ENCODE measurements at regions of chr6 and their contacts with region 1.

Region 1: DNA sequence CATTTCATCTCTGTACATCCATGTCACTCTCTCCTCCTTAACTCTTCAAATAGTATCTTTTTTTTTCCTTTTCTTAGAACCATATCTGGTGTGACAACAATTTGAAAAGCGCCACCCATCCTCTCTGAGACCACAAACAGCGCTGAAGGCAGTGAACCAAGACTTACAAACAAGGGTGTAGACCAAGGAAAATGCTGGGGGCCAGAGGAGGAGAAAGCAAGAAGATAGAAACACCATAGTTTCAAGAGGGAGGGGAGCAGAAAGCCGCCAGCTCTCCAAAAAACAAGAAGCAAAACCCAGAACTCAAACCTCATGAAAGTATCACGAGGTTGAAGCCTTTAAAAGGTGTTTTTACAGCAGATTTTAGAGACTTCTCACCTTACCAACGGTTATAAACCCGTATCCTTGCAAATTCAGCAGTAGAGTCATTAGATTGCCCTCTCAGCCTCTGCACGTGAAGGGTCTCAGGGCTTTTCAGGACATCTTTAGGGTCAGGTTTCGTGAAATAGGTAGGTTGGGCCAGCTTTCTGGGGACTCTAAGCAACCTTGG is 13.3 kb upstream of the RIPOR2 start:
- DNase-seq: peak; percentile 70 to 86 (median 83)
- H3K4me3 ChIP-seq: peak overlapping the region; percentile 19 to 47
- H3K4me3 Mint-ChIP-seq: peak overlapping the region; percentile 57 to 90 (median 82)
- H3K27ac ChIP-seq: peak overlapping the region; percentile 51
- H3K27ac Mint-ChIP-seq: peak overlapping the region; percentile 84 to 97 (median 95)
- H3K4me1 ChIP-seq: peaks cover 79% of the 10 kb centered on the region
- H3K4me1 Mint-ChIP-seq: peaks cover 56 to 87% (median 72%) of the 10 kb centered on the region in 4 donors
- H3K27me3 ChIP-seq: no peaks in the 10 kb centered on the region
- H3K27me3 Mint-ChIP-seq: no peaks in the 10 kb centered on the region

Region 2: GRCh38 chr6:24855395-24856245 is 93.5 kb before region 1 on chr6:
- CTCF ChIA-PET with region 1: no interaction called
- POLR2A ChIA-PET with region 1: interaction called, 27 read pairs
- intact Hi-C with region 1: no loop called
- DNase-seq: peak; percentile 76 to 82 (median 77)
- H3K4me3 ChIP-seq: no peak overlapping the region
- H3K4me3 Mint-ChIP-seq: peak overlapping the region in 5 of 8 donors; percentile 1 to 87 (median 26)
- H3K27ac ChIP-seq: peak overlapping the region; percentile 61
- H3K27ac Mint-ChIP-seq: peak overlapping the region; percentile 82 to 92 (median 90)
- H3K4me1 ChIP-seq: peaks cover 53% of the 10 kb centered on the region
- H3K4me1 Mint-ChIP-seq: peaks cover 48 to 58% (median 50%) of the 10 kb centered on the region in 4 donors
- H3K27me3 ChIP-seq: no peaks in the 10 kb centered on the region
- H3K27me3 Mint-ChIP-seq: no peaks in the 10 kb centered on the region

Region 3: GRCh38 chr6:24910961-24911712 is 38.0 kb before region 1 on chr6:
- CTCF ChIA-PET with region 1: interaction called, 5 read pairs
- POLR2A ChIA-PET with region 1: interaction called, 29 read pairs
- intact Hi-C with region 1: no loop called
- DNase-seq: peak in 3 of 5 donors; percentile 41 to 65 (median 44)
- H3K4me3 ChIP-seq: peak overlapping the region; percentile 1 to 54
- H3K4me3 Mint-ChIP-seq: peak overlapping the region; percentile 87 to 98 (median 93)
- H3K27ac ChIP-seq: peak overlapping the region; percentile 70
- H3K27ac Mint-ChIP-seq: peak overlapping the region; percentile 87 to 99 (median 96)
- H3K4me1 ChIP-seq: peaks cover 94% of the 10 kb centered on the region
- H3K4me1 Mint-ChIP-seq: peaks cover 83 to 99% (median 91%) of the 10 kb centered on the region in 4 donors
- H3K27me3 ChIP-seq: no peaks in the 10 kb centered on the region
- H3K27me3 Mint-ChIP-seq: no peaks in the 10 kb centered on the region

Region 4: GRCh38 chr6:24927985-24928745 is 20.9 kb before region 1 on chr6:
- CTCF ChIA-PET with region 1: interaction called, 333 read pairs
- POLR2A ChIA-PET with region 1: interaction called, 1,351 read pairs
- intact Hi-C with region 1: no loop called
- DNase-seq: no peak
- H3K4me3 ChIP-seq: peak overlapping the region; percentile 63 to 67
- H3K4me3 Mint-ChIP-seq: peak overlapping the region; percentile 96 to 100 (median 99)
- H3K27ac ChIP-seq: peak overlapping the region; percentile 53
- H3K27ac Mint-ChIP-seq: peak overlapping the region; percentile 78 to 97 (median 94)
- H3K4me1 ChIP-seq: peaks cover 86% of the 10 kb centered on the region
- H3K4me1 Mint-ChIP-seq: peaks cover 44 to 85% (median 66%) of the 10 kb centered on the region in 4 donors
- H3K27me3 ChIP-seq: no peaks in the 10 kb centered on the region
- H3K27me3 Mint-ChIP-seq: peaks cover 0 to 1% of the 10 kb centered on the region in 2 donors

Region 5: DNA sequence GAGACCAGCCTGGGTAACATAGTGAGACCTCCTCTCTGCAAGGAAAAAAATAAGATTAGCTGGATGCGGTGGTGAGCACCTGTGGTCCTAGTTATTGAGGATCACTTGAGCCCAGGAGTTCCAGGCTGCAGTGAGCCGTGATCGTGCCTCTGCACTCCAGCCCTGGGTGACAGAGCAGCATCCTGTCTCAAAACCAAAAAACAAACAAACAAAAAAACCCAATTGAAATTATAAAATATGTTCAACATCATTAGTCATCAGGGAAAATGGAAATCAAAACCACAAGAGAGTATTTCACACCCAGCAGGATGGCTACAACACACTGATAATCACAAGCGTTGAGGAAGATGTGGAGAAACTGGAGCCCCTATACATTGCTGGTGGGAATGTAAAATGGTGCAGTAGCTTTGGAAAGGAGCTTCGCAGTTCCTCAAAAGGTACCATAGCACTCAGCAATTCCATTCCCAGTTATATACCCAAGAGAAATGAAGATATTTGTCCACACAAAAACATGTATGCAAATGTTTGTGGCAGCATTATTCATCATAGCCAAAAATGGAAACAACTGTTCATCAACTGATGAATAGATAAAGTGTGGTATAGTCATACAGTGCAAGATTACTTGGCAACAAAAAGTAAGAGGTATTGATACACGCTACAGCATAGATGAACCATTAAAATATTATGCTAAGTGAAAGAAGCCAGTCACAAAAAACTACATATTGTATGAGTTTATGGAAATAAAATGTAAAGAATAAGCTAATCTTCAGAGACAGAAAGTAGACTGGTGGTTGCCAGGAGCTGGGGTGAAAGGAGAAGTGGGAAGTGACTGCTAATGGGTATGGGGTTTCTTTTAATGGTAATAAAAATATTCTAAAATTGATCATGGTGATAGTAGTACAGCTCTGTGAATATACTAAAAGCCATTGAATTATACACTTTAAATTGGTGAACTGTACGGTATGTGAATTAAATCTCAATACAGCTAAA is 25.4 kb after region 1 on chr6:
- CTCF ChIA-PET with region 1: interaction called, 10 read pairs
- POLR2A ChIA-PET with region 1: interaction called, 393 read pairs
- intact Hi-C with region 1: loop called (anchors 1 kb)
- DNase-seq: peak; percentile 46 to 73 (median 55)
- H3K4me3 ChIP-seq: peak overlapping the region in 1 of 2 donors; percentile 7
- H3K4me3 Mint-ChIP-seq: peak overlapping the region; percentile 66 to 78 (median 71)
- H3K27ac ChIP-seq: peak overlapping the region; percentile 49
- H3K27ac Mint-ChIP-seq: peak overlapping the region; percentile 91 to 97 (median 94)
- H3K4me1 ChIP-seq: peaks cover 67% of the 10 kb centered on the region
- H3K4me1 Mint-ChIP-seq: peaks cover 49 to 85% (median 72%) of the 10 kb centered on the region in 4 donors
- H3K27me3 ChIP-seq: no peaks in the 10 kb centered on the region
- H3K27me3 Mint-ChIP-seq: no peaks in the 10 kb centered on the region